PC-9 (cell line): ENCODE measurements at regions of chr14 and their contacts with region 1.

Region 1: DNA sequence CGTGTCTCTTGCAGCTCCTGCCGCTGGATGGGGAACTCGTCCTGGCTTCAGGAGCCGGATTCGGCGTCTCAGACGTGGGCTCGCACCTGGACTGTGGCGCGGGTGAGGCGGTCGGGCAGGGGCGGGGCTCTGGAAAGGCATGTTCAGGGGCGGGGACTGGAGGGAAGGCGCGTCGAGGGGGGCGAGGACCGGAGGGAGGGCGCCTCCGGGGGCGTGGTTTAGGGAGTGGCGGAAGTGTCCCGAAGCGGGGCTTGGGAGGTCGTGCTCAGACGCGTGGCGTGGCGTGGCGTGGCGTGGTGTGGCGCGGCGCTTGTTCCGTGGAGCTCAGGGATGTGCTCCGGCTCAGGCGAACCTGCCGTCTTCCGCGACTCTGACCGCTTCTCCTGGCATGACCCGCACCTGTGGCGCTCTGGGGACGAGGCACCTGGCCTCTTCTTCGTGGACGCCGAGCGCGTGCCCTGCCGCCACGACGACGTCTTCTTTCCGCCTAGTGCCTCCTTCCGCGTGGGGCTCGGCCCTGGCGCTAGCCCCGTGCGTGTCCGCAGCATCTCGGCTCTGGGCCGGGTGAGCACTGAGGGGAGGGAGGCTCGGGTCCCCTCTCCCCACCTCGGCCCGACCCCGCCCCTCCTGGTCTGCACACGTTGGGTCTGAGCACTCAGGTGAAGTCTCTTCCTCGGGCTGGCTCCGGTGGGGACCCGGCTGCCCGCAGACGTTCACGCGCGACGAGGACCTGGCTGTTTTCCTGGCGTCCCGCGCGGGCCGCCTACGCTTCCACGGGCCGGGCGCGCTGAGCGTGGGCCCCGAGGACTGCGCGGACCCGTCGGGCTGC is 6.2 kb downstream of the AMN start:
- DNase-seq: peak; percentile 83 to 97
- H3K4me3 ChIP-seq: peak overlapping the region; percentile 87
- H3K27ac ChIP-seq: peak overlapping the region; percentile 74
- H3K4me1 ChIP-seq: peaks cover 20% of the 10 kb centered on the region
- H3K27me3 ChIP-seq: no peaks in the 10 kb centered on the region
- CTCF ChIP-seq: no peak

Region 2: DNA sequence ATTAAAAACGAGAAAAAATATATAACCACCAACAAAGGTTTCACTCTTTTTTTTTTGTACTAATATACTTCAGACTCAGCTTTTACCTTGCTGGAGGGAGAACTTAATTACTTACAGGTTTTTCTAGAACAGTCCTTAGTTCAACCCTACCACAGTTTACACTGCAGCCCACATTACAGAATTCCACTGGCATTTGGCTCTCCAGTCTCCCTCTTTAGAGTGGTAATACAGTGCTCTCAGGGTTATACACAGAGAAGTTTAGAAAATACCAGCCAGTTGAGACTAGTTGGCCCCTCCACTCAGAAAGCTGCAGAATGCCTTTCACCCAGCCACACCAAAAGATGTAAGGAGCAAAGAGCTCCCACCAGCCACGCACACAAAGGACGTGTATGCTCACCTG is 1489.6 kb before region 1 on chr14:
- CTCF ChIA-PET with region 1: interaction called, 17 read pairs
- POLR2A ChIA-PET with region 1: no interaction called
- intact Hi-C with region 1: no loop called
- DNase-seq: no peak
- H3K4me3 ChIP-seq: no peak overlapping the region
- H3K27ac ChIP-seq: no peak overlapping the region
- H3K4me1 ChIP-seq: peaks cover 7% of the 10 kb centered on the region
- H3K27me3 ChIP-seq: no peaks in the 10 kb centered on the region
- CTCF ChIP-seq: no peak